ENCODE measurements at regions of chr11 and their contacts with region 1.

Region 1: GRCh38 chr11:114059278-114059983 is at the start of gene ZBTB16:
- DNase-seq: peak; percentile 88 to 95
- H3K4me3 ChIP-seq: peak within 1 kb of the TSS; percentile 94 to 99
- H3K27ac ChIP-seq: peak within 1 kb of the TSS; percentile 97 to 98
- H3K4me1 ChIP-seq: peaks cover 0 to 42% (median 28%) of the 10 kb centered on the region in 4 donors
- H3K27me3 ChIP-seq: no peaks in the 10 kb centered on the region
- CTCF ChIP-seq: peak in 1 of 2 experiments; percentile 35

Region 2: DNA sequence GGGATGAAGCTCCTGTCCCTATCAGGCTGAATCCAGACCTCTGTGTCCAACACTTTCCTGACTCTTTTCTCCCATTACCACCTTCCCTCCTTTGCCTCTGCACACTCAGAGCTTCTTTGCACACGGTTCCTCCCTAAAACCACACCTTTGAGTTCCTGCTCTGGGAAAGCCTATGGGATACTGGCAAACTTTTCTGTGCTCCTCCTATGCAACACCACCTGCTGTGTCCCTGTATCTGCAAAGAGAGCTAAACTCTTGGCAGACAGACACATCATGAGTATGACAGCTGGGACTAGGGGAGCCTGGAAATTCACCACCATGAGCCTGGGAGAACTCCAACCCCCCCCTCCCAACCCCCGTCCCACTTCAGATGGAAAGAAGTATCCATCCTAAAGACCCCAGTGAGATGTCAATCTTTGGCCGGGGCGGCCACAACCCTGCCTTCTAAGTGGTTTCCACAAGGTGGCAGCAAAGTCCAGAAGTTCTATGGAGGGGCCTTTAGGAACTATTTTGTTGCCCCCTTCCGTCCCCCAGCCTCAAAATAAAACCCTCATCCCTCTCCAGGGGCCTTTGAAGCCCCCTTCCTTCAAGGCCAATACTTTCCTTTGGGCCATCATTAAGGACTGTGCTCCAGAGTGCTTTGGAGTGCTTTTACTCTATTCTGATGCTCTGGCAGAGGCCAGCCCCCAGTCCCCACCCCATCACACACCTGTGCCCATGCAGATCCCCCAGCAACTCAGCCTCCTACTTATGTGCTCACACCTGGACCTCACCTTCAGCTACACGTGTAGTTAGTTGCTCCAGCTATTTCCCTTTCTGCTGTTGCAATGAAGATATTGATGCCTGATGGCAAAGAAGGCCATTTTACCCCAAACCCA is 65.1 kb before region 1 on chr11:
- intact Hi-C with region 1: loop called (anchors 5 kb)
- DNase-seq: no peak
- H3K4me3 ChIP-seq: no peak overlapping the region
- H3K27ac ChIP-seq: no peak overlapping the region
- H3K4me1 ChIP-seq: no peaks in the 10 kb centered on the region
- H3K27me3 ChIP-seq: peaks cover 0 to 40% of the 10 kb centered on the region in 2 donors
- CTCF ChIP-seq: peak; percentile 69 to 71

Region 3: GRCh38 chr11:114180301-114181055 is 121.0 kb after region 1 on chr11:
- intact Hi-C with region 1: loop called (anchors 5 kb)
- DNase-seq: no peak
- H3K4me3 ChIP-seq: peak overlapping the region; percentile 44 to 53
- H3K27ac ChIP-seq: peak overlapping the region; percentile 84 to 98
- H3K4me1 ChIP-seq: peaks cover 0 to 96% (median 85%) of the 10 kb centered on the region in 4 donors
- H3K27me3 ChIP-seq: no peaks in the 10 kb centered on the region
- CTCF ChIP-seq: peak; percentile 35 to 37

Region 4: DNA sequence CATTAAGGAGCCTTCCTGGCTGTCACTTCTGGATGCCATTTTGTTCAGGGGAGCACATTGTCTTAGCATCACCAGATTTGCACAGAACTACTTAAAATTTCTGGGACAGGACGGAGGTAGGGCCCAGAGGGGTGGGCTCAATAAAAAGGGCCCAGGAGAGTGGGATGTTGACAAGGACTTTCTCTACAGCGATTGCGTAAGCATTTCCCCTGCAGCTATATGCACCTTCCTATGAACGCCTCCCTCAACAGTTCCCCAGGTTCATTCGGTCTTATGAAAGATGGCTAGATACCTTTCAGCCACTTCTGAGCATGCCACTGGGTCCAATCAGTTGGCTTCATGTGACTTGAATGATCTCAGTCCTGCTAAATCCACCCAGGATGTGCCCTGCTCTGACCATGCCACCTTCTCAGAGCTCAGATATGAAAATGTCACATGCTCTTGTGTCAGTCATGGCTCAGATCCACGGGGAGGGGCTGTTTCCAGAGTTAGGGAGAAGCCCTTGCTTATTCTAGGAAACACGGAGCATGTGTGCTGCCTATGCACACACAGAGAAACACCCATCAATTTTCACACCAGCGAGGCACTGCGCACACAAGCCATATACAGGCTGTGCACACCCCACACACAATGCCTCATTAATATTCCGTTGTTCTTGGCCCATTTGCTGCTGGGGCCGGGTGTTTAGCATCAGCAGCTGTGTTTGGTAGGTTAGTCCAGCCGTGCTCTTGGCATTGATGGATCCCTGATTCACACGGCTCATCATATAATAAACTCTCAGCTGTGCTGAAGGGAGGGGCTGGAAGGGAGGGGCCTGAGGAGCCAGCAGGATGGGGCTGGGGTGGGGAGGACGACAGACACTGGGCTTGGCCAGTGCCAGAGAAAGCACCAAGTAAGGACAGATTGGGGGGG is 184.3 kb after region 1 on chr11:
- intact Hi-C with region 1: no loop called
- DNase-seq: no peak
- H3K4me3 ChIP-seq: no peak overlapping the region
- H3K27ac ChIP-seq: peak overlapping the region; percentile 46 to 56
- H3K4me1 ChIP-seq: peaks cover 0 to 68% (median 25%) of the 10 kb centered on the region in 4 donors
- H3K27me3 ChIP-seq: no peaks in the 10 kb centered on the region
- CTCF ChIP-seq: no peak

Region 5: DNA sequence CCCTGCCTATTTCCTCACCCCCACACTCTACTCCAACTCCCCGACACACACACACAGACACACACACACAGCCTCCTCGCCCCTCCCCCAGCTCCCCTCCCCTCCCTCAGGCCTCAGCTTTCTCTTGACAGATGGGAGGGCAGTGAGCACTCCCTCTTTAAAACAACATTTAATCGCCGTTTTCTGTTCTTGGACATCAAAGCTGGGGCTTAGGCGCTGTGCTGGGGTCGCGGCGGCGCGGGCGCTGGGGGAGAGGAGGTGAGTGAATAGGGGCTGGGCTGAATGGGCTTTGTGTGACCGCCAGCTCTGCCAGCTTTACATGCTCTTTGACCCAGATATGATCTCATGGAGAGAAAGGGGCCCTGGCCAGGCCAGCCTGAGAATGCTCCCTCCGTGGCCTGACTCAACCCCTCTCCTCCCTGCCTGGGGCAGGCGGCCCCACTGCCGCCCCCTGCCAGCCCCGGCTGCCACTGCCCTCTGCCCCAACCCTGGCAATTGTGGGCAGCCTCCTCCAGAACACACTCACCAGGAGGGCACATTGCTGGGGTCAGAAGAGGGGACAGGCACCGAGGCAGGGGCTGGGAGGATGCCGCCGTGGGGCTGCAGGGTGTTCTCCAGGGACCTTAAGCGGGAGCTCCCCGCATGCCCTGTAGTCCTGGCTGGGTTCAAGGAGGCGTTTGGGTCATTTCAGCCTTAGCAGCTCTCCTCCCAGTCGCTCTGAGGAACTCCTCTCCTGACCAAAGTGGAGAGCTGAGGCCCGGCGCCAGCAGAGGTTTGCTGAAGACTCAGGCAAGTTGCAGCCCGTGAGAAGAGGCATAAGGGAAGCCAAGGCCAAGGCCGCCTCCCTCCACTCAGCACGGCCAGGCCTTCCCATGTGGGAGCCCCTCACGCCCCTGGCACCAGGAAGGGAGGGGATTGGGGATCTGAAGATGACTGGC is 198.5 kb after region 1 on chr11:
- intact Hi-C with region 1: loop called (anchors 5 kb)
- DNase-seq: peak; percentile 78 to 86
- H3K4me3 ChIP-seq: peak overlapping the region; percentile 8 to 16
- H3K27ac ChIP-seq: peak overlapping the region; percentile 67 to 75
- H3K4me1 ChIP-seq: peaks cover 0 to 94% (median 49%) of the 10 kb centered on the region in 4 donors
- H3K27me3 ChIP-seq: no peaks in the 10 kb centered on the region
- CTCF ChIP-seq: peak; percentile 24 to 34

Measured in tibial artery (tissue), 4 donors.